CD14-positive monocyte (primary cell): ENCODE measurements at regions of chr1 and their contacts with region 1.

Region 1: DNA sequence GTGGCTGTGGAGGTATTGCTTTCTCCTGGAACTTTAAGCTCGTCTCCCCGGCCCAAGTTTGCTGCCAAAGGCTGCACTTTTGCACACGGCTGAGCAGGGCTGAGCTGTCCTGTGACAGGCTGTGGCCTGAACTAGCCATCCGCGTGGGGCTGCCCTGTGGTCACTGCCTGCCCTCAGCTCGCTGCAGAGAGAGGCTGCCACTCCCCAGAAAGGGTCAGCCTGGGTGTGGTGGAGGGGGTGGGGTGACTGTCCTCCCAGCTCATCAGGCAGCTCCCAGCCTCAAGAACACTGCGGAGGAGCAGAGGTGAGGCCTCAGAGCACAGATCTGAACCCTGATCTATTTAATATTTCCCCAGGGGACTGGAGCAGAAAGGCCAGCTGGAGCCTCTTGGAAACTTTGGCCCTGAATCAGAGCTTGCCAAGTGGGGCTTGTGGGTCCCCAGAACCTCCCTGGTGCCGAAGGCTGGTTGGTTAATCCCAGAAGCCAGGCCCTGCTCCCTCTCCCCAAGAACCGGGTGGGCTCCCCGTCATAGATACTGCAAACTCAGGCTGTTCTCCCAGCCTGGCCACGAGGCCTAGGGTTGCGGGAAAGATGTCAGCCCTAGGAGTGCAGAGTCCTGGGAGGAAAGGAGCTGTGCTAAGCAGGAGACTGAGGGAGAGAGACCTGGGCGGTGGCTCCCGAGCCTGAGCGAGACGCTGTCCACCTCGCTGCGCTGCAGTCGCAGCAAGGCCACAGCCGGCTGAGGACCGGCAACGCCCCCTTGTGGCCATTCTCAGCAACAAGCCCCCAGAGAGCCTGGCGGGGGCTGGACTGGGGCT is 125.1 kb upstream of the IPO9 start:
- DNase-seq: peak; percentile 66 to 73 (median 71)
- H3K4me3 ChIP-seq: no peak overlapping the region
- H3K4me3 Mint-ChIP-seq: no peak overlapping the region
- H3K27ac ChIP-seq: no peak overlapping the region
- H3K27ac Mint-ChIP-seq: peak overlapping the region in 1 of 7 donors; percentile 60
- H3K4me1 ChIP-seq: peaks cover 0 to 4% of the 10 kb centered on the region in 2 donors
- H3K4me1 Mint-ChIP-seq: peaks cover 10% of the 10 kb centered on the region
- H3K27me3 ChIP-seq: no peaks in the 10 kb centered on the region
- H3K27me3 Mint-ChIP-seq: peaks cover 0 to 2% (median 0%) of the 10 kb centered on the region in 3 donors
- CTCF ChIP-seq: peak; percentile 97

Region 2: DNA sequence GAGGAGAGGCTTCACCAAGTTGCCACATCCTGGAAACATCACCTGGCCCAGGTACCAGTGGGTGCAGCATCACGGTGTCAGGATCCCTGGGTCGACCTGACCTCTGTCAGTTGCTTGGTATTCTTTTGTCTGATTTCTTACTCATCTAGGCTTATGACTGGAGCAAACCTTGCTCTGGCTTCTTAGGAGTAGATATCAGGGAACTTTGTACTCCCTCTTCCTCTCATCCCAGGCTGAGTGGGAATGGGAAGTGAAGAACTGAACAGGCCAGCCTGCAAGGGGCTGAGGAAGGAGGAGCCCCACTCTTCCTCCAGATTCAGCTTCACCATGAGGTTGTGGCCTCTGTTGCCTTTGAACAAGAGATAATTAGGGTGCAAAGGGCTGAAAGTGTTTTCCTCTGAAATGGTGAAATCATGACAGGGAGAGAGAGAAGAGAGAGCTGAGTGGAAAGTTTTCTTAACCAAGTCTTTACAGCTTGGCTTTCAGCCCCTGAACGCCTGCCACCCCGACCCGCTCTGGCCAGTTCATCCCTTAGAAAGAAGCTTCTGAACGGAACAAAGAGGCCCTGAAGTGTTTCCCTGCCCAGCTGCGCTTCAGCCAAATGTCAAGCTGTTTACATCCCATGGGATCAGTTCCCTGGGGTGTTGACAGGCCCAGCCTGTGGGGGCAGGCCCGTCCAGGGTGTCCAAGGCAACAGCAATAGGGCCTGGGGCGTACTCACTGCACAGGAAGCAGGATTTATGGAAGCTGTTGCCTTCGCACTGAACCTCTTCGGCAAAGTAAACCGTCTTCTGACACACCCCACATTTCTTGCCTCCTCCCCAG is 208.1 kb before region 1 on chr1:
- intact Hi-C with region 1: no loop called
- DNase-seq: no peak
- H3K4me3 ChIP-seq: no peak overlapping the region
- H3K4me3 Mint-ChIP-seq: no peak overlapping the region
- H3K27ac ChIP-seq: no peak overlapping the region
- H3K27ac Mint-ChIP-seq: peak overlapping the region in 1 of 7 donors; percentile 40
- H3K4me1 ChIP-seq: peaks cover 24 to 29% of the 10 kb centered on the region in 2 donors
- H3K4me1 Mint-ChIP-seq: peaks cover 34% of the 10 kb centered on the region
- H3K27me3 ChIP-seq: no peaks in the 10 kb centered on the region
- H3K27me3 Mint-ChIP-seq: peaks cover 0 to 6% (median 4%) of the 10 kb centered on the region in 3 donors
- CTCF ChIP-seq: no peak

Region 3: GRCh38 chr1:201530741-201531531 is 172.9 kb before region 1 on chr1:
- intact Hi-C with region 1: loop called (anchors 2 kb)
- DNase-seq: peak; percentile 55 to 70 (median 66)
- H3K4me3 ChIP-seq: no peak overlapping the region
- H3K4me3 Mint-ChIP-seq: peak overlapping the region; percentile 16 to 51
- H3K27ac ChIP-seq: no peak overlapping the region
- H3K27ac Mint-ChIP-seq: no peak overlapping the region
- H3K4me1 ChIP-seq: peaks cover 12% of the 10 kb centered on the region in 2 donors
- H3K4me1 Mint-ChIP-seq: peaks cover 16% of the 10 kb centered on the region
- H3K27me3 ChIP-seq: no peaks in the 10 kb centered on the region
- H3K27me3 Mint-ChIP-seq: peaks cover 0 to 6% (median 1%) of the 10 kb centered on the region in 3 donors
- CTCF ChIP-seq: peak; percentile 84

Region 4: DNA sequence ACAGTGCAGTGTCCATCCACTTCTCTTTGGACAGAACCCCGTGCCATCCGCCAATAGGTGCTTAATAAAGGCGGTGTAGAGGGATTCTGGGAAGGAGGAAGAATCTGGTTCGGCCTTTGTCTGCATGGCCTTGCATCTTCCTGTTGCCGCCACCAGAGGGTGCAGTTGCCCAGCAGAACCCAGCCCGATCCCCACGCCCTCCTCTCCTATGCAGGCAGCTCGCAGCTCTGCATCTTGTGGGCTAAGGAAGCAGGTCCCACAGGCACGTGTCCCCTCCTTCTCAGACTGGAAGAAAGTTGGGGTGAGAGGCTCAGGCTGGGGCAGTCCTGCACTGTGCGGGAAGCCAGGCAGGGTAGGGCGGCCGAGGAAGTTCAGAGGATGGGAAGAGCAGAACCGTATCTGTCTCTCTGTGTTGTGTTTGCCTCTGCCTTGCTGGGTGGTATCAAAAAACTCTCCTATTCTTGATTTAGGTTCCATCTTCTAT is 144.1 kb before region 1 on chr1:
- intact Hi-C with region 1: loop called (anchors 2 kb)
- DNase-seq: peak; percentile 64 to 78 (median 72)
- H3K4me3 ChIP-seq: no peak overlapping the region
- H3K4me3 Mint-ChIP-seq: no peak overlapping the region
- H3K27ac ChIP-seq: no peak overlapping the region
- H3K27ac Mint-ChIP-seq: peak overlapping the region in 1 of 7 donors; percentile 54
- H3K4me1 ChIP-seq: peaks cover 3 to 9% of the 10 kb centered on the region in 2 donors
- H3K4me1 Mint-ChIP-seq: peaks cover 20% of the 10 kb centered on the region
- H3K27me3 ChIP-seq: no peaks in the 10 kb centered on the region
- H3K27me3 Mint-ChIP-seq: peaks cover 2 to 5% (median 3%) of the 10 kb centered on the region in 3 donors
- CTCF ChIP-seq: peak; percentile 91